ENCODE measurements at regions of chr2 and their contacts with region 1.

Region 1: GRCh38 chr2:118443596-118443995 is 355.3 kb downstream of the INSIG2 start:
- DNase-seq: peak; percentile 55
- H3K4me3 ChIP-seq: no peak overlapping the region
- H3K27ac ChIP-seq: no peak overlapping the region
- H3K4me1 ChIP-seq: no peaks in the 10 kb centered on the region
- H3K27me3 ChIP-seq: no peaks in the 10 kb centered on the region
- CTCF ChIP-seq: no peak

Region 2: DNA sequence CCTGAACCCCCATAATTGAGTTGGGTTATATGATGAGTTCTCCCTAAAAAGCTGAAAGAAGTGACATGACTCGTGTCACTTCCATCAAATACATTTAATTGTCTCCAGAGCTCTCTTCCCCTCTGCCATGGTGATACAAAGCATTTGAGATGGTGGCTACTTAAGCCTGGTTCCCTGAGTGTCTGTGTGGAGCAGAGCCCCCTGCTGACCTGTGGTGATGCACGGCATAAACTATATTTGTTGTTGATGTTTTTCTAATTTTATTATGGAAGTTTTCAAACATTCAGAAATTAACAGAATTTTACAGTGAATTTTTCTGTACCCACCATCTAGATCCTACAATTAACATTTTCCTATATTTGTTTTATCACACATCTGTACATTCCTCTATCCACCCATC is 689.7 kb before region 1 on chr2:
- CTCF ChIA-PET with region 1: interaction called, 10 read pairs
- dilution Hi-C with region 1: no loop called
- in situ Hi-C with region 1: no loop called
- intact Hi-C with region 1: no loop called
- DNase-seq: no peak
- H3K4me3 ChIP-seq: no peak overlapping the region
- H3K27ac ChIP-seq: no peak overlapping the region
- H3K4me1 ChIP-seq: no peaks in the 10 kb centered on the region
- H3K27me3 ChIP-seq: no peaks in the 10 kb centered on the region
- CTCF ChIP-seq: no peak

Region 3: GRCh38 chr2:118705032-118705431 is 261.4 kb after region 1 on chr2:
- CTCF ChIA-PET with region 1: no interaction called
- dilution Hi-C with region 1: no loop called
- in situ Hi-C with region 1: no loop called
- intact Hi-C with region 1: no loop called
- DNase-seq: peak; percentile 58
- H3K4me3 ChIP-seq: no peak overlapping the region
- H3K27ac ChIP-seq: no peak overlapping the region
- H3K4me1 ChIP-seq: no peaks in the 10 kb centered on the region
- H3K27me3 ChIP-seq: no peaks in the 10 kb centered on the region
- CTCF ChIP-seq: no peak

Region 4: GRCh38 chr2:118865106-118865505 is 421.5 kb after region 1 on chr2:
- CTCF ChIA-PET with region 1: no interaction called
- dilution Hi-C with region 1: no loop called
- in situ Hi-C with region 1: no loop called
- intact Hi-C with region 1: no loop called
- DNase-seq: peak; percentile 39
- H3K4me3 ChIP-seq: no peak overlapping the region
- H3K27ac ChIP-seq: no peak overlapping the region
- H3K4me1 ChIP-seq: peaks cover 8% of the 10 kb centered on the region
- H3K27me3 ChIP-seq: no peaks in the 10 kb centered on the region
- CTCF ChIP-seq: peak; percentile 63 to 75